ENCODE measurements at regions of chr9 and their contacts with region 1.

Region 1: GRCh38 chr9:14353222-14354056 is 39.5 kb upstream of the NFIB start:
- DNase-seq: peak; percentile 67
- ATAC-seq: peak; percentile 84
- H3K4me3 ChIP-seq: no peak overlapping the region
- H3K27ac ChIP-seq: no peak overlapping the region
- H3K4me1 ChIP-seq: no peaks in the 10 kb centered on the region; the same call in 1 of the 2 replicates
- H3K27me3 ChIP-seq: peaks cover 80% of the 10 kb centered on the region
- CTCF ChIP-seq: peak; percentile 85
- POLR2A ChIP-seq: no peak
- RAD21 ChIP-seq: peak; percentile 91

Region 2: DNA sequence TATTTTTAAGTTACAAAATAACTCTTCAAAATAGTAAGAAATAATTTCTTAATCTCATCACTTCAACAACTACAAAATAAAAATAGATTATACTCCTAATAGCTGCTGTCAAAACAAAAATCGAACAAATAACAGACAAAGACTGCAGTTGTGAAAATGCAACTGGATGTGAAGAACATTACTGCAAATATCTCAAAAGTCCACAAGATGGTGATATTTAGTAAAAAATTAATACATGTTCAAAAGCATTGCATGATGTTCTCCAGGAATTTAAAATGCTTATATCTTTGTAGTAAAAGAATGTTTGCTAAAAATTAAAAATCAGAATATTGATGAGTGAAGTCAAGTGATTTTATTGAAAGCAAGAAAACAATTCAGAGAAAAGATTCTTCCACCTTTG is 1140.1 kb before region 1 on chr9:
- CTCF ChIA-PET with region 1: interaction called, 3 read pairs
- POLR2A ChIA-PET with region 1: no interaction called
- dilution Hi-C with region 1: no loop called
- in situ Hi-C with region 1: no loop called
- intact Hi-C with region 1: loop called (anchors 5 kb)
- DNase-seq: peak; percentile 47
- ATAC-seq: no peak
- H3K4me3 ChIP-seq: no peak overlapping the region
- H3K27ac ChIP-seq: no peak overlapping the region
- H3K4me1 ChIP-seq: no peaks in the 10 kb centered on the region
- H3K27me3 ChIP-seq: no peaks in the 10 kb centered on the region
- CTCF ChIP-seq: peak; percentile 52
- POLR2A ChIP-seq: no peak
- RAD21 ChIP-seq: peak; percentile 53

Region 3: GRCh38 chr9:13351778-13352386 is 1001.6 kb before region 1 on chr9:
- CTCF ChIA-PET with region 1: no interaction called
- POLR2A ChIA-PET with region 1: no interaction called
- dilution Hi-C with region 1: no loop called
- in situ Hi-C with region 1: no loop called
- intact Hi-C with region 1: loop called (anchors 5 kb)
- DNase-seq: peak; percentile 65
- ATAC-seq: peak; percentile 75
- H3K4me3 ChIP-seq: no peak overlapping the region
- H3K27ac ChIP-seq: no peak overlapping the region
- H3K4me1 ChIP-seq: peaks cover 2% of the 10 kb centered on the region; the same call in 1 of the 2 replicates
- H3K27me3 ChIP-seq: no peaks in the 10 kb centered on the region
- CTCF ChIP-seq: peak; percentile 73
- POLR2A ChIP-seq: no peak
- RAD21 ChIP-seq: peak; percentile 65

Region 4: DNA sequence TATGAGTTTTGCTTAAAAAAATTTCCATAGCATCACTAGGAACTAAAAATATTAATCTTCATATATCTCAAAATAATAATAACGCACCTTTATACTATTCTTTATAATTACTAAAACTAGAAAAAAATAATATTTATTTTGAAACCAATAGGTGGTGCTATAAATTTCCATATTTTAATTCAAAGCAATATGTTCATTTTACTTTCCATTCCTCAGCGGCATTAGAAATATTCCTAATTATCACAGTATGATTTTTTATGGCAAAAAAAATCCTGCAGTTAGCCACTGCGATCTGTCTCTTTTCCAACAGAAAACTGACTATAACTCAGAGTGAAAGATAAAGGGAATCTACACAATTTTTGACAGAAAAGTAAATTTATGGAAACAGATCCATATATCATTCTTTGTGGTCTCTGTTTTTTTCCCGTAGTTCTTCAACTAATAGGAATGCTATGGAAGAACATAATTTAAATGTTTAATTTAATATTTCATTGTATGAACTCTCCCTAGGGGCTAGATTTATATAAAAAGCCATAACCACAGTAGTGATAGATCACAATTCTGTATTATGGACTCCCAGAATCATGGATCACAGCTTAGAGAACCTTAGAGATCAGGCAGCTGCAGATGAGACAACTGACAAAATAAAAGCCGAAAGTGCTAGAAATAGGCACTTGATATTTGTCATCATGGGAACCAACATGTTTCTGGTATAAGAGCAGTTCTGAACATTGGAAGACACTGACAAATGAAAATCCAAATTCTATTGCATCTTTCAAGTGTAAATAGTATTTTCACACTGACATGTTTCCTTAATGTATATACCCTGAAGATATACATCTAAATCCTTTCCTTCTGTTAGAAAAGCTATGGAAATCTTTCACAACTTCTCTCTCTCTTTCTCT is 906.2 kb before region 1 on chr9:
- CTCF ChIA-PET with region 1: no interaction called
- POLR2A ChIA-PET with region 1: no interaction called
- dilution Hi-C with region 1: no loop called
- in situ Hi-C with region 1: no loop called
- intact Hi-C with region 1: loop called (anchors 5 kb)
- DNase-seq: no peak
- ATAC-seq: no peak
- H3K4me3 ChIP-seq: no peak overlapping the region
- H3K27ac ChIP-seq: no peak overlapping the region
- H3K4me1 ChIP-seq: no peaks in the 10 kb centered on the region
- H3K27me3 ChIP-seq: peaks cover 12% of the 10 kb centered on the region
- CTCF ChIP-seq: 0 out of 2 replicates have a peak, but pooled peaks have one; percentile 4
- POLR2A ChIP-seq: no peak
- RAD21 ChIP-seq: no peak

Region 5: GRCh38 chr9:14193328-14193990 is 160.0 kb before region 1 on chr9:
- CTCF ChIA-PET with region 1: no interaction called
- POLR2A ChIA-PET with region 1: no interaction called
- dilution Hi-C with region 1: no loop called
- in situ Hi-C with region 1: no loop called
- intact Hi-C with region 1: no loop called
- DNase-seq: no peak
- ATAC-seq: no peak
- H3K4me3 ChIP-seq: no peak overlapping the region
- H3K27ac ChIP-seq: no peak overlapping the region
- H3K4me1 ChIP-seq: no peaks in the 10 kb centered on the region
- H3K27me3 ChIP-seq: peaks cover 2% of the 10 kb centered on the region; the same call in 1 of the 2 replicates
- CTCF ChIP-seq: no peak
- POLR2A ChIP-seq: no peak
- RAD21 ChIP-seq: no peak

Region 6: GRCh38 chr9:14366076-14366475 is 12.6 kb after region 1 on chr9:
- CTCF ChIA-PET with region 1: interaction called, 17 read pairs
- POLR2A ChIA-PET with region 1: no interaction called
- dilution Hi-C with region 1: no loop called
- in situ Hi-C with region 1: no loop called
- intact Hi-C with region 1: no loop called
- DNase-seq: peak; percentile 93
- ATAC-seq: peak; percentile 92
- H3K4me3 ChIP-seq: no peak overlapping the region
- H3K27ac ChIP-seq: no peak overlapping the region
- H3K4me1 ChIP-seq: peaks cover 3% of the 10 kb centered on the region; the same call in 1 of the 2 replicates
- H3K27me3 ChIP-seq: peaks cover 7% of the 10 kb centered on the region
- CTCF ChIP-seq: no peak
- POLR2A ChIP-seq: no peak
- RAD21 ChIP-seq: no peak

Region 7: GRCh38 chr9:14395317-14396082 is 42.1 kb after region 1 on chr9:
- CTCF ChIA-PET with region 1: no interaction called
- POLR2A ChIA-PET with region 1: no interaction called
- dilution Hi-C with region 1: no loop called
- in situ Hi-C with region 1: no loop called
- intact Hi-C with region 1: no loop called
- DNase-seq: no peak
- ATAC-seq: no peak
- H3K4me3 ChIP-seq: no peak overlapping the region
- H3K27ac ChIP-seq: no peak overlapping the region
- H3K4me1 ChIP-seq: no peaks in the 10 kb centered on the region
- H3K27me3 ChIP-seq: peaks cover 28% of the 10 kb centered on the region
- CTCF ChIP-seq: no peak
- POLR2A ChIP-seq: no peak
- RAD21 ChIP-seq: no peak

Region 8: DNA sequence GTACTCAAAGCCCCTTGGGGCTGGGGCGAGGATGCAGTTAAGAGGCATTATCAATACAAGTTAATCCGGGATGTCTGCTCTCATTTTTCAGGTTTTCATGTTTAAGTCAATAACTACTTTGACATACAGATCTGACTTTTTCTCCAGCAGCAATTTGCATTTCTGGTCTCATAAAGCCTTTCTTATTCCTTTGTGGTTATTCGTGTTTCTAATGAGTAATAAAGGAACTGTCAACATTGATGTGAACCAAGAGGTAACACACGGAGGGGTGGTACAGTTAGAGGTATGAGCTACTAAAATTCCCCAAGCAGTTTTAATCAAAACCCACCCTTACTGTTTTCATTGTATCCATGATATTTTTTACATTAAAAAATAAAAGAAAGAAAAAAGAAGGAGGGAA is 98.5 kb after region 1 on chr9:
- CTCF ChIA-PET with region 1: no interaction called
- POLR2A ChIA-PET with region 1: no interaction called
- dilution Hi-C with region 1: no loop called
- in situ Hi-C with region 1: no loop called
- intact Hi-C with region 1: no loop called
- DNase-seq: no peak
- ATAC-seq: no peak
- H3K4me3 ChIP-seq: no peak overlapping the region
- H3K27ac ChIP-seq: no peak overlapping the region
- H3K4me1 ChIP-seq: no peaks in the 10 kb centered on the region
- H3K27me3 ChIP-seq: no peaks in the 10 kb centered on the region; the same call in 1 of the 2 replicates
- CTCF ChIP-seq: no peak
- POLR2A ChIP-seq: no peak
- RAD21 ChIP-seq: no peak

Region 9: GRCh38 chr9:14497476-14497875 is 144.0 kb after region 1 on chr9:
- CTCF ChIA-PET with region 1: no interaction called
- POLR2A ChIA-PET with region 1: no interaction called
- dilution Hi-C with region 1: no loop called
- in situ Hi-C with region 1: no loop called
- intact Hi-C with region 1: no loop called
- DNase-seq: no peak
- ATAC-seq: no peak
- H3K4me3 ChIP-seq: no peak overlapping the region
- H3K27ac ChIP-seq: no peak overlapping the region
- H3K4me1 ChIP-seq: no peaks in the 10 kb centered on the region
- H3K27me3 ChIP-seq: no peaks in the 10 kb centered on the region
- CTCF ChIP-seq: no peak
- POLR2A ChIP-seq: no peak
- RAD21 ChIP-seq: no peak